ENCODE measurements at regions of chr11 and their contacts with region 1.

Region 1: DNA sequence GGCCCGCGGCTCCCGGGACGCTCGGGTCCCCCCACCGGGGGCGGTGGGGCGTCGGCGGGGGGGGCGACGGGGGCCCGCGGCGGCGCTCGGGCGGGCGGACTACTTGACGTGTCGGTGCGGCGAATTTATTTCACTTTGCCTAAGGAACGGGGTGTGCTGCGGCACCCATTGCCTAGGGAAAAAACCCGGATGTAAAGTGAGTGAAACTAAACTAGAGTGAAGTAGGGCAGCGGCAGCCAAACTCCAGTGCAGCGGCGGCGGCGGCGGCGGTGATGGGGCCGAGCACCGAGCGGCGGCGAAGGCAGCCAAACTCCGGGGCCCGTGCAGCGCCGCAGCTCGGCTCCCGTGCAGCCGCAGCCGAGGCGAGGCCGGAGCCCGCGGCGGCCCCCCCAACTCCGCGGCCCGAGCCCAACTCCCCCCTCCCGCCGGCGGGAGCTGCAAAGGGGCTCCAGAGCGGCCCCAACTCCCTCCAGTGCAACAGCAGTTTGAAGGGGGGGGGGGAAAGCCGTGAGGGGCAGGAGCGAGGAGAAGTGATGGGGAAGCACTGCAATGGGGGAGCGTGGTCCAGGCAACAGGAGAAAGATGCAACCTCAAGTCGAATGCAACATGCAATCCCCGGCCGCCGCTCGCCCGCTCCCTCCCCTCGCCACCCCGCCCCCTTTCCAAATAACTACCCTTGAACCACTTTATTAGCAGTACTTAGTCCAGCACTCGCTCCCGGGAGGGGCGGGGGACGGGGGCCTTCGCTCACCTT is 647 bp upstream of the PHF21A start:
- DNase-seq: peak; percentile 74 to 81
- H3K4me3 ChIP-seq: peak overlapping the region; percentile 64
- H3K27ac ChIP-seq: peak overlapping the region; percentile 24
- H3K4me1 ChIP-seq: peaks cover 41% of the 10 kb centered on the region
- H3K27me3 ChIP-seq: no peaks in the 10 kb centered on the region
- CTCF ChIP-seq: no peak

Region 2: DNA sequence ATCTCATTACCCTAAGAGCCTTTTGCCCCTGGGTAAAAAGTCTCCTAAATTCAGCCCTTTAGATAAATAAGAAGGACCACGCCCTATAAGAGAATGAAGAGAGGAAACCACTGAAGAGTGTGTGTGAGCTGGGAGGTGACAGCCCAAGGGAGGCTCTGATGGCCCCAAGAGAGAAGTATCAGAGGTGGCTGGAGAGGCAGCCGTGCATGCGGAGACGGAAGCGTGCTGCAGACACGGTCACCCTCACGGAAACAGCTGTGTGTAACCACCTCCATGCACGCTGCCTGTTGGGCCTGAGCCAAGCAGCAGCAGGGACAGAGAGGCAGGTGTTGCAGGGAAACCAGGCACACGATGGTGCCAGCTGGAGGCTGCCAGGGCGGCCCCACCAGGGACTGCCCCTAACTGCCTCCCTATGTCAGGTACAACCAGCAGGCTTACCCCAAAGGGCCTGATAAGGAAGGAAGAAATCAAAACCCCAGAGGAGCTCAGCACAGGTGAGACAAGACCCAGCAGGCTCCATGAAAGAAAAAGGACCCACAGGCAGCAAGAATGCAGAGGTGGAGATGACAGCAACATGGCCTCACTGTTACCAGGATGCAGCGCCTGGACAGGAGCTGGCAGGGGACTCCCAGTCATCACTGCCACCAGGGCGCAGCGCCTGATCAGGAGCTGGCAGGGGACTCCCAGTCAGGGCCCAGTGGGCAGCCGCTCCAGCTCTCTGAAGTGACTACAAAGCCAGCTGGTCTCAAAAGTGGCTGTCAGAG is 191.7 kb before region 1 on chr11:
- CTCF ChIA-PET with region 1: no interaction called
- POLR2A ChIA-PET with region 1: no interaction called
- intact Hi-C with region 1: no loop called
- DNase-seq: peak in 1 of 2 experiments; percentile 40
- H3K4me3 ChIP-seq: no peak overlapping the region
- H3K27ac ChIP-seq: no peak overlapping the region
- H3K4me1 ChIP-seq: 0 out of 2 replicates have a peak, but pooled peaks cover 4% of the 10 kb centered on the region
- H3K27me3 ChIP-seq: no peaks in the 10 kb centered on the region
- CTCF ChIP-seq: no peak

Region 3: DNA sequence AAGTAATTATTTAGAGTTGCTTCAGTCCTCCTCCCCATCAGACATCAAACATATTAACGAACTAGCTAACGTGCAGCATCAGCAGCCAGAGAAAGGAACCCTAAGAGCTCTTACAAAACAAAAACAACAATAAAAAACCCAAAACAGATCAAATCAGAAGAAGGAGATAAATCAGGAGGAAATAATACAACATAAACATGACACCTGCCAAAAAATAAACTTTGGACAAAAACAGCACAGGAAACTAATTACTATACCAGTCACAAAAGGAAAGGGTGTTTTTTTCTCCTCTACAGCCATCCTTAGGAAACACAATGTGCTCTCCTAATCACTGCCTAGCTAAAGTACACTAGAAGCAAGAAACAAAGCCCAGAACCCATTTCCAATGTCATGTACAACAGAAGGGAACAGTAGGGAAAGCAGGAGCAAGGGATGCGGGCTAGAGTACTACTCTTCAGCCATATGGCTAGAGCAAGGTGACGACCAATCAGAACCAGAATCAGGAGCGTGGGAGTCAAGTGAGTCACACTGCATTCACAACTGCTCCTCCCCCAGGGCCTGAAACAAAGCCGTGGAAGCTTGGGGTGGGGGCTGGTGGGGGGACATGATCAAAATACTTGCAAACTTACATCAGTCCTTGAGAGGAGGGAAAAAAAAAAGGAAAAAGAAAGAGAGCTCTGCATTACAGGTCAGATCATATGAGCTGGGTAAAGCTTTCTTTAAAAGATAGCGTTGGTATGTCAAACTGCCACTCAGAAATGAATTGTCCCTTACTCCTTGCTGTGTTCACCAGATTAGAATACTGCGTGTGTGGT is 139.0 kb before region 1 on chr11:
- CTCF ChIA-PET with region 1: interaction called, 12 read pairs
- POLR2A ChIA-PET with region 1: no interaction called
- intact Hi-C with region 1: no loop called
- DNase-seq: no peak
- H3K4me3 ChIP-seq: no peak overlapping the region
- H3K27ac ChIP-seq: no peak overlapping the region
- H3K4me1 ChIP-seq: no peaks in the 10 kb centered on the region
- H3K27me3 ChIP-seq: no peaks in the 10 kb centered on the region
- CTCF ChIP-seq: no peak

Region 4: DNA sequence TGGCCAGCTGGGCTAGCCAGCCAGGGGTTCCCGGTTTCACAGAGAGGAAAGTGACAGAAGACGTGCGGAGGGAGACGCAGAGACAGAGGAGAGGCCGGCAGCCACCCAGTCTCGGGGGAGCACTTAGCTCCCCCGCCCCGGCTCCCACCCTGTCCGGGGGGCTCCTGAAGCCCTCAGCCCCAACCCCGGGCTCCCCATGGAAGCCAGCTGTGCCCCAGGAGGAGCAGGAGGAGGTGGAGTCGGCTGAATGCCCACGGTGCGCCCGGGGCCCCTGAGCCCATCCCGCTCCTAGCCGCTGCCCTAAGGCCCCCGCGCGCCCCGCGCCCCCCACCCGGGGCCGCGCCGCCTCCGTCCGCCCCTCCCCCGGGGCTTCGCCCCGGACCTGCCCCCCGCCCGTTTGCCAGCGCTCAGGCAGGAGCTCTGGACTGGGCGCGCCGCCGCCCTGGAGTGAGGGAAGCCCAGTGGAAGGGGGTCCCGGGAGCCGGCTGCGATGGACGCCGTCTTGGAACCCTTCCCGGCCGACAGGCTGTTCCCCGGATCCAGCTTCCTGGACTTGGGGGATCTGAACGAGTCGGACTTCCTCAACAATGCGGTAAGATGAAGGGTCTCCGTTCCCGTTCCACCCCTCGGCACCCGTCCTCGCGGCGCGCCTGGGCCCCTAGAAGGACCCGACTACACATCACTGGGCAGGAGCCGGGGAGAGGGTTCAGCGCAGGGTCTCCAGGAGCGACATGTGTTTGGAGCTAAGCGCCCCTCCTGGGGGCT is 155.9 kb after region 1 on chr11 and contains the start of gene CREB3L1:
- CTCF ChIA-PET with region 1: no interaction called
- POLR2A ChIA-PET with region 1: no interaction called
- intact Hi-C with region 1: no loop called
- DNase-seq: no peak
- H3K4me3 ChIP-seq: no peak within 1 kb of the TSS
- H3K27ac ChIP-seq: no peak within 1 kb of the TSS
- H3K4me1 ChIP-seq: peaks cover 29% of the 10 kb centered on the region
- H3K27me3 ChIP-seq: 0 out of 2 replicates have a peak, but pooled peaks cover 3% of the 10 kb centered on the region
- CTCF ChIP-seq: no peak
- total RNA-seq, gene CREB3L1: 1.3 and 3.1 TPM in 2 replicates

Region 5: GRCh38 chr11:46718155-46719019 is 596.5 kb after region 1 on chr11:
- CTCF ChIA-PET with region 1: no interaction called
- POLR2A ChIA-PET with region 1: no interaction called
- intact Hi-C with region 1: loop called (anchors 5 kb)
- DNase-seq: no peak
- H3K4me3 ChIP-seq: no peak overlapping the region
- H3K27ac ChIP-seq: no peak overlapping the region
- H3K4me1 ChIP-seq: peaks cover 28% of the 10 kb centered on the region
- H3K27me3 ChIP-seq: no peaks in the 10 kb centered on the region
- CTCF ChIP-seq: no peak

Measured in PC-9 (cell line).